Breast epithelium (tissue), 4 donors: ENCODE measurements at regions of chr2 and their contacts with region 1.

Region 1: DNA sequence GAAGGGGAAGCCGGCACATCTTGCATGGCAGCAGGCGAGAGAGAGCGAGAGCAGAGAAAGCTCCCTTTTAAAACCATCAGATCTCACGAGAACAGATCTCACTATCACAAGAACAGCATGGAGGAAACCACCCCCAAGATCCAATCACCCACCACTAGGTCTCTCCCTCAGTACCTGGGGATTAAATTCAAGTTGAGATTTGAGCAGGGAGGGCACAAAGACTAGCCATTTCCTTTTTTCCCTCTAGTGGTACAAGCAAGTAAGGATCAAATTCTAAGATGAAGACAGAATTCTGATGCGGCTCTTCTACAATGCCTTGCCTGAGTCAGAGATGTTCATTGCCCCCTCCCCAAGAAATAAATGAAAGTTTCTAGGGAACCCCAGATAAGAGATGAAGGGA is 45.6 kb upstream of the ANKRD44 start:
- DNase-seq: no peak
- H3K4me3 ChIP-seq: no peak overlapping the region
- H3K27ac ChIP-seq: no peak overlapping the region
- H3K4me1 ChIP-seq: no peaks in the 10 kb centered on the region
- H3K27me3 ChIP-seq: no peaks in the 10 kb centered on the region
- CTCF ChIP-seq: no peak
- POLR2A ChIP-seq: no peak

Region 2: DNA sequence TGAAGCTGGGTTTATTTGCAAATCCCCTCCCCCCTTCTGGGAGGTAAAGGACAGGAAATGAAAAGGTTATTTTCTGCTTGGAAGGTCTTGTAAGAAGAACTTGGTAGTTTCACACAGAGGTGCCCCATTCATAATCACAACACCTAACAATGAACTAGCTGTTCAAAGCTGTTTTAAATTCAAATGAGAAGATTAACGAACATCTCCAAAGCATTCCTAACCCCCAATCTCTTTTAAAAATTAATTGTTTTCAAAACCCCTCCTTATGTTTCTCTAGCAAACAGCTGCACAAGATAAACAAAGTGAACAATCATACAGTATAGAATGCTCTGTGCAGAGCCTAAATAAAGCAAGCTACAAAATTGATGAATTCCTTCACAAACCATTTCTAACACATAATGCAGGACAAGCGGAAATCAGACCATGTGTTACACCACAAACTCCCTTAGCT is 1830.2 kb after region 1 on chr2:
- intact Hi-C with region 1: loop called (anchors 10 kb)
- DNase-seq: no peak
- H3K4me3 ChIP-seq: no peak overlapping the region
- H3K27ac ChIP-seq: no peak overlapping the region
- H3K4me1 ChIP-seq: no peaks in the 10 kb centered on the region
- H3K27me3 ChIP-seq: no peaks in the 10 kb centered on the region
- CTCF ChIP-seq: no peak
- POLR2A ChIP-seq: no peak